CD8-positive, alpha-beta T cell (primary cell): ENCODE measurements at regions of chr15 and their contacts with region 1.

Region 1: GRCh38 chr15:80776420-80777045 is 2.6 kb upstream of the CEMIP start:
- DNase-seq: peak; percentile 19 to 76 (median 56)
- ATAC-seq: no peak
- H3K4me3 ChIP-seq: no peak overlapping the region
- H3K4me3 Mint-ChIP-seq: no peak overlapping the region
- H3K27ac ChIP-seq: no peak overlapping the region
- H3K27ac Mint-ChIP-seq: no peak overlapping the region
- H3K4me1 ChIP-seq: peaks cover 11% of the 10 kb centered on the region
- H3K4me1 Mint-ChIP-seq: peaks cover 3% of the 10 kb centered on the region
- H3K27me3 ChIP-seq: peaks cover 9 to 18% of the 10 kb centered on the region in 2 experiments
- H3K27me3 Mint-ChIP-seq: peaks cover 27% of the 10 kb centered on the region
- CTCF ChIP-seq: peak; percentile 73

Region 2: DNA sequence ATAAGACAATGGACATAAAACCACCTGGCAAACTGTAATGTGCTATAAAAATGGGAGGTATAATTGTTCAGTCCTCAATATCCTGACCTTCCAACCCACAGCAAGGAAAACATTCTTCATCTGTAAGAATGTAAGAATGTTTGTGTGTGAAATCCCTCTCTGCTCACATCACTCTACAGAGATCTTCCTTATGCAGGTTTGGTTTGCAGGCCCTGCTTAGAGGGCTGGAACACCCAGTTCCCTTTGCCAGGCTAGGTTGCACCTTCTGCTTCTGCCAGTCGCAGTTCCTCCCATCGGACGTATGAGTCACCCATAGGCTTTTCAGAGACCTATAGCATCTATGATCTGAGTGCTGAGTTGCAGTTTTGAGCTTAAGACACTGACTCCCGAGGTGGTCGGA is 1368.5 kb before region 1 on chr15:
- CTCF ChIA-PET with region 1: no interaction called
- POLR2A ChIA-PET with region 1: no interaction called
- intact Hi-C with region 1: no loop called
- DNase-seq: no peak
- ATAC-seq: no peak
- H3K4me3 ChIP-seq: no peak overlapping the region
- H3K4me3 Mint-ChIP-seq: no peak overlapping the region
- H3K27ac ChIP-seq: no peak overlapping the region
- H3K27ac Mint-ChIP-seq: no peak overlapping the region
- H3K4me1 ChIP-seq: no peaks in the 10 kb centered on the region
- H3K4me1 Mint-ChIP-seq: no peaks in the 10 kb centered on the region
- H3K27me3 ChIP-seq: no peaks in the 10 kb centered on the region
- H3K27me3 Mint-ChIP-seq: no peaks in the 10 kb centered on the region
- CTCF ChIP-seq: no peak

Region 3: GRCh38 chr15:80567721-80568157 is 208.8 kb before region 1 on chr15:
- CTCF ChIA-PET with region 1: interaction called, 27 read pairs
- POLR2A ChIA-PET with region 1: interaction called, 3 read pairs
- intact Hi-C with region 1: loop called in 1 of 2 experiments (anchors 1 kb)
- DNase-seq: peak in 3 of 9 experiments; percentile 16 to 50 (median 35)
- ATAC-seq: no peak
- H3K4me3 ChIP-seq: no peak overlapping the region
- H3K4me3 Mint-ChIP-seq: no peak overlapping the region
- H3K27ac ChIP-seq: no peak overlapping the region
- H3K27ac Mint-ChIP-seq: no peak overlapping the region
- H3K4me1 ChIP-seq: no peaks in the 10 kb centered on the region
- H3K4me1 Mint-ChIP-seq: no peaks in the 10 kb centered on the region
- H3K27me3 ChIP-seq: no peaks in the 10 kb centered on the region
- H3K27me3 Mint-ChIP-seq: peaks cover 12% of the 10 kb centered on the region
- CTCF ChIP-seq: peak; percentile 14

Region 4: DNA sequence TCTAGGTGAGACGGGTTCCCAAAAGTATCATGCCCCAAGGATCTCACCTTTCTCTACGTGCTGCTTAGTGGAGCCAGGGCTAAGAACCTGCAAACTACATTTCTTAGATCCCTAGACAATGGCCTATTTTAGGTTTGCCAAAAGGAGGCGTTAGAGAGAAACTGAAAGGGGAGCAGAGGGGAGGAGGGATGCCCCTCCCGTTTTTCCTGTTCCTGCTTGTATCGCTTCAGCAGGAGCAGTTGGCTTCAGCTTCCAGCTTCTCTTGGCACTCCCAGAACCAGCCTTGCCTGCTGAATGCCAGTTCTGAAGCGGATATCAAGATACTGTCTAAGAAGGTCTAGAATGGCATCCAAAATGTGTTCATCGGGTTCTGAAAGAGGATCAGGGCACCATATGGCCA is 139.9 kb before region 1 on chr15:
- CTCF ChIA-PET with region 1: no interaction called
- POLR2A ChIA-PET with region 1: no interaction called
- intact Hi-C with region 1: loop called in 1 of 2 experiments (anchors 10 kb)
- DNase-seq: no peak
- ATAC-seq: no peak
- H3K4me3 ChIP-seq: no peak overlapping the region
- H3K4me3 Mint-ChIP-seq: no peak overlapping the region
- H3K27ac ChIP-seq: no peak overlapping the region
- H3K27ac Mint-ChIP-seq: no peak overlapping the region
- H3K4me1 ChIP-seq: no peaks in the 10 kb centered on the region
- H3K4me1 Mint-ChIP-seq: no peaks in the 10 kb centered on the region
- H3K27me3 ChIP-seq: no peaks in the 10 kb centered on the region
- H3K27me3 Mint-ChIP-seq: peaks cover 8% of the 10 kb centered on the region
- CTCF ChIP-seq: no peak

Region 5: GRCh38 chr15:80787316-80787715 is 10.8 kb after region 1 on chr15:
- CTCF ChIA-PET with region 1: interaction called, 23 read pairs
- POLR2A ChIA-PET with region 1: no interaction called
- intact Hi-C with region 1: no loop called
- DNase-seq: no peak
- ATAC-seq: no peak
- H3K4me3 ChIP-seq: no peak overlapping the region
- H3K4me3 Mint-ChIP-seq: no peak overlapping the region
- H3K27ac ChIP-seq: no peak overlapping the region
- H3K27ac Mint-ChIP-seq: no peak overlapping the region
- H3K4me1 ChIP-seq: no peaks in the 10 kb centered on the region
- H3K4me1 Mint-ChIP-seq: no peaks in the 10 kb centered on the region
- H3K27me3 ChIP-seq: no peaks in the 10 kb centered on the region
- H3K27me3 Mint-ChIP-seq: peaks cover 9% of the 10 kb centered on the region
- CTCF ChIP-seq: no peak

Region 6: DNA sequence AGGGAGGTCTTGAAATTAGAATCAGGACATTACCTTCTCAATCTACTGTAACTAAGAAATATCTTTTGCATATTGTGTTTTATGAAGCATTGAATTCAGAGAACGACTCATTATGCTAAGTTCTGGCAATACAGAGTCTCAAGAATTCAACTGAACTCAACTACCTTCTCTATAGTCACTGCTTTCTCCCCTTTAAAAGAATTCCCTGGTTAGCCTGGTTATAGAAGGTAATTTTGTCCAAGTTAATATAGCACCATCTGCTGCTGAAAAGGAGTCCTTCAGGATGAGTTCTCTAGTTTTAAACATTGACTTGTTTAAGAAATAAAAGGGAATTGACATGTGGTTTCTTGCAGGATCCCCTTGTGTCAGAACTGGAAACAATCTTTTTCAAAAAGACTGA is 480.4 kb after region 1 on chr15:
- CTCF ChIA-PET with region 1: no interaction called
- POLR2A ChIA-PET with region 1: no interaction called
- intact Hi-C with region 1: no loop called
- DNase-seq: no peak
- ATAC-seq: no peak
- H3K4me3 ChIP-seq: no peak overlapping the region
- H3K4me3 Mint-ChIP-seq: no peak overlapping the region
- H3K27ac ChIP-seq: no peak overlapping the region
- H3K27ac Mint-ChIP-seq: no peak overlapping the region
- H3K4me1 ChIP-seq: no peaks in the 10 kb centered on the region
- H3K4me1 Mint-ChIP-seq: no peaks in the 10 kb centered on the region
- H3K27me3 ChIP-seq: peaks cover 0 to 6% of the 10 kb centered on the region in 2 experiments
- H3K27me3 Mint-ChIP-seq: peaks cover 7% of the 10 kb centered on the region
- CTCF ChIP-seq: no peak